Dendritic cell treated with granulocyte-macrophage colony-stimulating factor and Interleukin-4, amounts not matched to agents 40 ng/mL and 50 ng/mL, for 4 days (primary cell): ENCODE measurements at regions of chr22 and their contacts with region 1.

Region 1: GRCh38 chr22:49847751-49848689 is 5.6 kb upstream of the ZBED4 start:
- H3K4me3 Mint-ChIP-seq: peak overlapping the region; percentile 90
- H3K27ac Mint-ChIP-seq: peak overlapping the region; percentile 98
- H3K4me1 Mint-ChIP-seq: peaks cover 37% of the 10 kb centered on the region
- H3K27me3 Mint-ChIP-seq: peaks cover 18% of the 10 kb centered on the region

Region 2: GRCh38 chr22:49827853-49828598 is 20.0 kb before region 1 on chr22 and contains the start of gene BRD1:
- intact Hi-C with region 1: loop called (anchors 2 kb)
- H3K4me3 Mint-ChIP-seq: peak within 1 kb of the TSS; percentile 83
- H3K27ac Mint-ChIP-seq: peak within 1 kb of the TSS; percentile 84
- H3K4me1 Mint-ChIP-seq: peaks cover 54% of the 10 kb centered on the region
- H3K27me3 Mint-ChIP-seq: peaks cover 3% of the 10 kb centered on the region